Aorta (tissue), 5 donors: ENCODE measurements at regions of chr5 and their contacts with region 1.

Region 1: DNA sequence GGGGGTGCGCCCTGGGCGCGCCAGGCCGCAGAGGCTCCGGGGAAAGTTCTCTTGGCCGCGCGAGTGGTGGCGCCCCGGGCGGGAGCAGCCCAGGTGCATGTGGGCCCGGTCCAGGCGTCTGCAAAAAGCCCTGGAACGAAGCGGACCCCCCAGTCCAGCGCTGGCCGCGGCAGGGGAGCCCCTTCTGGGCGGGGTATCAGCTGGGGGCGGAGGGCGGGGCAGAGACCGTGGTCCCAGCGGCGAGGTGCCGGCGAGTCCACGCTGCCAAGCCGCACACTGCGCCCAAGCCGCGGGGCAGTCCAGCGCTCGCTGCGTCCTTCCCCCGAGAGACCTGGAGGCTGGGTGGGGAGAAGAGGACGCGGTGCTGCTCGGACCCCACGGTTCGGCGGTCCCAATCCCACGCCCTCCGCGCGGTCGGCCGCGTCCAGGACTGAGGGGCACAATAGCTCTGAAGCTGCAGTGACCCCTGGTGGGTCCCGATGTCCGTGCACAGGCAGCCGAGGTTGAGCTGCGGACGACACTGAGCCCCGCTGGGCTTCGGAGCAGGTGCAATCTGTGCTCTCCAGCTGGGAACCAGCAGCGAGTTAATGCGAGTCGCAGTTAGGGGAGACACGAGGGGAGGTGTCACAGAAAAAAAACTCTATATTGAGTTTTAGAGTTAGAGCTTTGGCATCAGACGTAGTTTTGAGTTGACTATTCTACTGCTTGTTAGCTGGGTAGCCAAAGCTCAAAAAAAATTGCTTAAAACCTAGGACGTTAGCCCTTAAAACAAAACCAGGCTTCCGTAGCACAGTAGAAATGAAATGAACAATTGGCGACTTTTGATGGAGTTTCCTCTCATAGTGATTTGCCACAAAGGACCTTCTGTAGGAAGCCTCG is 1.1 kb upstream of the EPB41L4A start:
- DNase-seq: peak; percentile 86 to 94
- ATAC-seq: peak; percentile 96
- H3K4me3 ChIP-seq: peak overlapping the region; percentile 48 to 73
- H3K27ac ChIP-seq: no peak overlapping the region
- H3K4me1 ChIP-seq: no peaks in the 10 kb centered on the region
- H3K27me3 ChIP-seq: no peaks in the 10 kb centered on the region

Region 2: DNA sequence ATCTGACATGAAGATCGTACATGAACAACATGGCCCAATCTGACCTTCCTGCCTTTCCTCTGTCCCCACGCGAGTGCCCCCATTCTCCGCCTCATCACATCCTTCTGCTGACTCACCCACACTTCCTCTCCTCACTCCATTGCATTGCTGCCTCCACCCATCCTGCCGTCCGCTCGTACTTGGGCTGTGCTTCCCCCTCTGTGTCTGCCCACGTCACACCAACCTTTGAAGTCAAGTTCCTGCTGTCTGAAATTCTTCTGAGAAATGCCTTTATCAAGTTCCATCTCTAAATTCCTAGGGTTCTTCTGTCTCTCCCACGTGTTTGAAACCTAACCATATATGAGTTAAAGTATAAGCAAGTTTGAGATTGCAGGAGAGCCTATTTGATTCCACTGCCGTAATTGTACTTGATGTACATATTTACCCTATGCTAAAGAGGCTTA is 889.9 kb before region 1 on chr5:
- intact Hi-C with region 1: loop called in 1 of 2 experiments (anchors 10 kb)
- DNase-seq: peak; percentile 81 to 88
- ATAC-seq: peak; percentile 82
- H3K4me3 ChIP-seq: no peak overlapping the region
- H3K27ac ChIP-seq: no peak overlapping the region
- H3K4me1 ChIP-seq: no peaks in the 10 kb centered on the region
- H3K27me3 ChIP-seq: no peaks in the 10 kb centered on the region

Region 3: GRCh38 chr5:112174959-112175594 is 245.1 kb before region 1 on chr5:
- intact Hi-C with region 1: loop called (anchors 2 to 10 kb)
- DNase-seq: no peak
- ATAC-seq: peak; percentile 84
- H3K4me3 ChIP-seq: no peak overlapping the region
- H3K27ac ChIP-seq: no peak overlapping the region
- H3K4me1 ChIP-seq: no peaks in the 10 kb centered on the region
- H3K27me3 ChIP-seq: no peaks in the 10 kb centered on the region

Region 4: GRCh38 chr5:112210430-112211005 is 209.7 kb before region 1 on chr5:
- intact Hi-C with region 1: loop called (anchors 1 to 5 kb)
- DNase-seq: peak in 1 of 2 donors; percentile 46
- ATAC-seq: peak; percentile 67
- H3K4me3 ChIP-seq: no peak overlapping the region
- H3K27ac ChIP-seq: no peak overlapping the region
- H3K4me1 ChIP-seq: no peaks in the 10 kb centered on the region
- H3K27me3 ChIP-seq: no peaks in the 10 kb centered on the region